PC-3 (cell line): ENCODE measurements at regions of chr2 and their contacts with region 1.

Region 1: GRCh38 chr2:194867328-194867727 is 789.7 kb upstream of the SLC39A10 start:
- DNase-seq: peak; percentile 44
- ATAC-seq: peak; percentile 81
- H3K4me3 ChIP-seq: no peak overlapping the region
- H3K27ac ChIP-seq: no peak overlapping the region
- H3K4me1 ChIP-seq: no peaks in the 10 kb centered on the region
- H3K27me3 ChIP-seq: no peaks in the 10 kb centered on the region
- CTCF ChIP-seq: peak; percentile 64

Region 2: GRCh38 chr2:194166818-194167217 is 700.5 kb before region 1 on chr2:
- CTCF ChIA-PET with region 1: no interaction called
- POLR2A ChIA-PET with region 1: no interaction called
- intact Hi-C with region 1: loop called (anchors 5 kb)
- DNase-seq: peak; percentile 53
- ATAC-seq: peak; percentile 64
- H3K4me3 ChIP-seq: no peak overlapping the region
- H3K27ac ChIP-seq: no peak overlapping the region
- H3K4me1 ChIP-seq: no peaks in the 10 kb centered on the region
- H3K27me3 ChIP-seq: no peaks in the 10 kb centered on the region
- CTCF ChIP-seq: peak; percentile 59

Region 3: GRCh38 chr2:195021711-195022507 is 154.6 kb after region 1 on chr2:
- CTCF ChIA-PET with region 1: no interaction called
- POLR2A ChIA-PET with region 1: no interaction called
- intact Hi-C with region 1: no loop called
- DNase-seq: no peak
- ATAC-seq: no peak
- H3K4me3 ChIP-seq: no peak overlapping the region
- H3K27ac ChIP-seq: no peak overlapping the region
- H3K4me1 ChIP-seq: 0 out of 2 replicates have a peak, but pooled peaks cover 11% of the 10 kb centered on the region
- H3K27me3 ChIP-seq: no peaks in the 10 kb centered on the region
- CTCF ChIP-seq: no peak